Esophagus muscularis mucosa (tissue), 4 donors: ENCODE measurements at regions of chr6 and their contacts with region 1.

Region 1: DNA sequence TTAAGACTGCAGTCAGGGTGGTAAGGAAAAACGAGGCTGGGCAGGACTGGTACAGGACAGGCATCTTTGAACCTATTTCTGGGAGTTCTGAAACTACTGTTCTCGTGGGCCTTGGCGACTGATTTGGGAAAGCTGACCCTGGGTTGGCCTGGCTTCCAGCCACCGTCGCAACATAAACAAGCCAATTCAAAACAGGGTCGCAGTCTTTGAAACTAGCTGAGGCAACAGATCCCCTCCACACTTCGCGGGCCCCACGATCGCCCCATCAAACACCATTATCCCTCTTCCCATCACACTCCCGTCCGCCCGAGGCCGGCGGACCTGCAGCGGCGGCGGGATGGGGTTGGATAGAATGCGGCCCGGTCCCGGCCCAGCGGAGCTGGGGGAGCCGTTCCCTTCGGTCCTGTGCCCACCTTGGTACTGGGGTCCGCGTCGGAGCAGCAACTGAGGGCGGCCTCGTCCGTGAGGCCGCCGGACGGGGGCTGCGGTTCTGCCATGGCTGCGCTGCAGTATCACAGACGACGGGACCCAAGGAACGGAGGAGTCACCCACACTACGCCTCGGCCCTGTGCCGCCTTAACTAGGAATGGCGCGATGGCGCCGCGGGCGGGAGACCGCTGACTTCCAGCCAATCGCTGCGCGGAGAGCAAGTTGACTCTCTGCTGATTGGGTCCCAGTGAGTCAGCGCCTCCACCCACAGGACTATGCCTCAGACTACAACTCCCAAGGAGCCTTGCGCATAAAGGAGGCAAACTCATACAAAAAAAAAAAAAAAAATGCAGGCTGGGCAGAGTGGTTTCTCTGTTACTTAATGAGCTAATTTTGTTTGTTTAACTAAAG is at the start of gene GLO1:
- DNase-seq: peak; percentile 99
- H3K4me3 ChIP-seq: peak within 1 kb of the TSS; percentile 65 to 97 (median 76)
- H3K27ac ChIP-seq: peak within 1 kb of the TSS; percentile 87 to 98 (median 93)
- H3K4me1 ChIP-seq: peaks cover 0 to 22% (median 10%) of the 10 kb centered on the region in 4 donors
- H3K27me3 ChIP-seq: peaks cover 0 to 6% (median 0%) of the 10 kb centered on the region in 4 donors
- CTCF ChIP-seq: no peak
- EP300 ChIP-seq: no peak
- POLR2A ChIP-seq: no peak
- total RNA-seq, gene GLO1: 61.5 to 92.5 (median 70.4) TPM

Region 2: GRCh38 chr6:37239950-37240713 is 1462.6 kb before region 1 on chr6:
- intact Hi-C with region 1: no loop called
- DNase-seq: peak; percentile 97
- H3K4me3 ChIP-seq: no peak overlapping the region
- H3K27ac ChIP-seq: peak overlapping the region; percentile 69 to 81 (median 74)
- H3K4me1 ChIP-seq: peaks cover 40 to 66% (median 58%) of the 10 kb centered on the region in 4 donors
- H3K27me3 ChIP-seq: no peaks in the 10 kb centered on the region
- CTCF ChIP-seq: no peak
- EP300 ChIP-seq: no peak
- POLR2A ChIP-seq: no peak

Region 3: GRCh38 chr6:38639498-38640215 is 63.1 kb before region 1 on chr6 and contains the start of gene BTBD9:
- intact Hi-C with region 1: loop called (anchors 10 kb)
- DNase-seq: peak; percentile 95
- H3K4me3 ChIP-seq: peak within 1 kb of the TSS; percentile 75 to 90 (median 83)
- H3K27ac ChIP-seq: peak within 1 kb of the TSS; percentile 87 to 94 (median 90)
- H3K4me1 ChIP-seq: peaks cover 16 to 26% (median 21%) of the 10 kb centered on the region in 4 donors
- H3K27me3 ChIP-seq: no peaks in the 10 kb centered on the region
- CTCF ChIP-seq: no peak
- EP300 ChIP-seq: no peak
- POLR2A ChIP-seq: no peak
- total RNA-seq, gene BTBD9: 9.4 to 14.1 (median 11.2) TPM